ENCODE measurements at regions of chr10 and their contacts with region 1.

Region 1: DNA sequence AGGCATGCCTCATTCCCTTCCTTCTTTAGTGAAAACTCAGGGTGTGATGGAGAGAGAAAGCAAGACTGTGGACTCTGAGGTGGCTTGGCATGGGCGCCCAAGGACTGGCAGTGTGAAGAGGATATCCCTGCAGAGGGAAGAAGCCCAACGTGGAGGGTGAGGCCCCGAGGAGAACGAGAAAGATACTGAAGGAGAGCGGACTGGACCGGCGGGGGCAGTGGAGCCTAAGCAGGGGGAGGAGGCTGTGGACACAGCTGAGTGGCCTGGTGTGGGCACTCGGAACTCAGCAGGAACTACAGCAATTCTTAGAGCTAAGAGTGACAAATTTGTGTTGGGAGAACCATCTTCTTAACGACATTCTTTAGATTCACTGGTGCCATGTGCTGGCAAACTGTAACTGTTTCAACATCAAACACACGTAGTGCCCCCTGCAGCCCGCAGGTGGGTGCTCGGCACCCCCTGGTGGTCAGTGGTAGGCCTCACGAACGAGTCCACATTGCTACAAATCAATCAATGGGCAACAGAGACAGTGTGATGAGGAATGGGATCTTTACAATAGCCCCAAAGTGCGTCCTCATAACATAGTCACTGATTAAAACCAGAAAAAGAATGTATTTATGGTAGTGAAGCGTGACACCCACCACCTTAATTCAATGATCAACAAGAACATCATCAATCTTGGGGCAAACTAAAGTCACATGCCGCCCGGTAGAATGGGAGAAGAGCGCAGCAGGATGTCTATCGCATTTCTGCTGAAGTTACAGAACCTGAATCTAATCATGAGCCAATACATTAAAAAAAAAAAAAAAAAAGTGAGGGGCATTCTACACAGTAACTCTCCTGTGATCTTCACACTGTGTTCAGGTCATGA is 2.0 kb upstream of the SFTPA1 start:
- DNase-seq: no peak
- H3K4me3 ChIP-seq: no peak overlapping the region
- H3K27ac ChIP-seq: no peak overlapping the region
- H3K4me1 ChIP-seq: no peaks in the 10 kb centered on the region
- H3K27me3 ChIP-seq: no peaks in the 10 kb centered on the region
- CTCF ChIP-seq: peak in 1 of 3 donors; percentile 32
- POLR2A ChIP-seq: no peak

Region 2: DNA sequence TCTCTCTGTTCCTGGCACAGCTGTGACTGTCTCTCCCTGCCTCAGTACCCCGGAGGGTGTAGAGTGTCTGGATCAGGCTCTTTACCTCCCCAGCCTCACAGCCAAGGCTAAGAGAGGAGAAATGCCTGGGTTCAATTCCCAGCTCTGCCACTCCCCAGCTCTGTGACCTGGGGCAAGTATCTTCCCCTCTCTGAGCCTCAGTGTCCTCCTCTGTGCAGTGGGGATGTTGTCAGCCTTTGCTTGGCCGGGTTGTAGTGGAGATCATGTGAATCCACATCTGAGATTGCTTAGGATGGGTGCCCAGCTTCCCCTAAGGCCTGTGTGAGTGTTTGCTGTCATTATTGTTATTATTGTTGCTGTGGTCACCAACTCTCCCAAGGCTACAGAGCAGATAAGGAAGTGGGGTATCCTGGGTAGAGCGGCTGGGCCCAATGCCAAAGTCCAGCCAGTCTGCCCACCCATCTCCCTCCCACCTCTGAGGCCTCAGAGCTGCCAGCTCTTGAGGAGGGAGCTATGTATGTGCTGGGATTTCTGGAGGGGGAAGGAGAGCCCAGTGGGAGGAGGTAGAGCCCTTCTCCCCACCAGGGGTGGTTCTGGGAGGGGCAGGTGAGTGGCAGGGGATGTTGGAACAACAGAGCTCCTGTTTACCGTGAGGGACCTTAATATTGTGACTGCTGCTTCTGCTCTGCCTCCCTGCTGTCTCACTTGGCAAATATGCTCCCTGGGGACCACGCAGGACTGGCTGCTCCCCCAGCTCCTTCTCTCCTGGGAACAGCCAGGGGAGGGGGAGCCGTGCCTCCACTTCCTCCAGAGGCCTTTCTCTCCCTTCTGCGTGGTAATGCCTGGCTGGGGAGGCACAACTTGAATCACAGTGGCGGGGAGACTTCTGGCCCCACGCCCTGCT is 1404.6 kb before region 1 on chr10:
- intact Hi-C with region 1: loop called (anchors 5 kb)
- DNase-seq: no peak
- H3K4me3 ChIP-seq: no peak overlapping the region
- H3K27ac ChIP-seq: no peak overlapping the region
- H3K4me1 ChIP-seq: no peaks in the 10 kb centered on the region
- H3K27me3 ChIP-seq: no peaks in the 10 kb centered on the region
- CTCF ChIP-seq: no peak
- POLR2A ChIP-seq: no peak

Measured in breast epithelium (tissue), 4 donors.